Gastrocnemius medialis (tissue), 4 donors: ENCODE measurements at regions of chr12 and their contacts with region 1.

Region 1: GRCh38 chr12:98838231-98838647 is 193.1 kb downstream of the APAF1 start:
- DNase-seq: no peak
- ATAC-seq: no peak
- H3K4me3 ChIP-seq: no peak overlapping the region
- H3K27ac ChIP-seq: no peak overlapping the region
- H3K4me1 ChIP-seq: no peaks in the 10 kb centered on the region
- H3K27me3 ChIP-seq: no peaks in the 10 kb centered on the region
- CTCF ChIP-seq: no peak
- POLR2A ChIP-seq: no peak

Region 2: GRCh38 chr12:98725476-98726247 is 112.6 kb before region 1 on chr12:
- in situ Hi-C with region 1: loop called in 1 of 4 experiments (anchors 25 kb)
- intact Hi-C with region 1: no loop called
- DNase-seq: no peak
- ATAC-seq: no peak
- H3K4me3 ChIP-seq: no peak overlapping the region
- H3K27ac ChIP-seq: no peak overlapping the region
- H3K4me1 ChIP-seq: no peaks in the 10 kb centered on the region
- H3K27me3 ChIP-seq: no peaks in the 10 kb centered on the region
- CTCF ChIP-seq: no peak
- POLR2A ChIP-seq: no peak

Region 3: GRCh38 chr12:98793121-98793520 is 45.1 kb before region 1 on chr12:
- in situ Hi-C with region 1: no loop called
- intact Hi-C with region 1: no loop called
- DNase-seq: no peak
- ATAC-seq: no peak
- H3K4me3 ChIP-seq: no peak overlapping the region
- H3K27ac ChIP-seq: no peak overlapping the region
- H3K4me1 ChIP-seq: no peaks in the 10 kb centered on the region
- H3K27me3 ChIP-seq: no peaks in the 10 kb centered on the region
- CTCF ChIP-seq: no peak
- POLR2A ChIP-seq: no peak